Caco-2 (cell line): ENCODE measurements at regions of chr2 and their contacts with region 1.

Region 1: DNA sequence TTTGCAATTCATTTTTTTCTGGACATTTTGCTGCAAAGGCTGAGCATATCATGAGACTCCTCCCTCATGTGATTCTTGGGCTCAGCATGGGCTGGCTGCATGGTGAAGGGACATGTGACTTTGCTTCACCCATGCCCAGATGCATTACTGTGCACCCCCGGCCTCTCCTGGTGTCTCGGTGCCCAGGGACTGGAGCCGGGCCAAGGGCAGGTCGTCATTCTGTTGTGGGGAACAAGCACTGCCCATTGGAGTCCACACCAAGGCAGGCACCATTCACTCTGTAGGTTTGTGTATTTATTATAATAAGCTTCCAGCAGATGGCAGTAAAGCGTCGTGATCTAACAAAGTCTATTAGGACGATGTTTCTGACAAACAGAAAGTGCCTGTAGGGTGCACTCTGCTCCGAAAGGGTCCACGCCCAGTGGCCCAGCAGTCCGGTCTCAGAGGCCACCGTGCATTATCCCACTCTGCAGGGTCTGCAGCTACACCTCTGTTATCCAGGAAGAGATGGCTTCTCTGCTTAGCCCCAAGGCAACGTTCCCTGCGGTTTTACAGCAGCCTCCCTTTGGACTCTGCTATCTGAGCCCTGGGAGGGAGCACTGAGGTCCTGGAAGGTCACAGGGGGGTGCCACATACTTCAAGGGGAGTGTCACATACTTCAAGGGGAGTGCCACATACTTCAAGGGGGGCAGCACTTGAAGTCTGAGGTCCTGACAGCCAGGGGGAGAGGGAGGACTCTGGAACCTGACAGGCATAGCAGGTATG is 219.6 kb downstream of the TSN start:
- DNase-seq: peak; percentile 77 to 82
- H3K4me3 ChIP-seq: peak overlapping the region; percentile 11; the same call in 1 of the 2 replicates
- H3K4me3 Mint-ChIP-seq: peak overlapping the region; percentile 40
- H3K27ac Mint-ChIP-seq: peak overlapping the region; percentile 73
- H3K4me1 ChIP-seq: peaks cover 9% of the 10 kb centered on the region
- H3K4me1 Mint-ChIP-seq: peaks cover 10% of the 10 kb centered on the region
- H3K27me3 ChIP-seq: no peaks in the 10 kb centered on the region
- H3K27me3 Mint-ChIP-seq: peaks cover 8% of the 10 kb centered on the region
- CTCF ChIP-seq: peak; percentile 57 to 80

Region 2: DNA sequence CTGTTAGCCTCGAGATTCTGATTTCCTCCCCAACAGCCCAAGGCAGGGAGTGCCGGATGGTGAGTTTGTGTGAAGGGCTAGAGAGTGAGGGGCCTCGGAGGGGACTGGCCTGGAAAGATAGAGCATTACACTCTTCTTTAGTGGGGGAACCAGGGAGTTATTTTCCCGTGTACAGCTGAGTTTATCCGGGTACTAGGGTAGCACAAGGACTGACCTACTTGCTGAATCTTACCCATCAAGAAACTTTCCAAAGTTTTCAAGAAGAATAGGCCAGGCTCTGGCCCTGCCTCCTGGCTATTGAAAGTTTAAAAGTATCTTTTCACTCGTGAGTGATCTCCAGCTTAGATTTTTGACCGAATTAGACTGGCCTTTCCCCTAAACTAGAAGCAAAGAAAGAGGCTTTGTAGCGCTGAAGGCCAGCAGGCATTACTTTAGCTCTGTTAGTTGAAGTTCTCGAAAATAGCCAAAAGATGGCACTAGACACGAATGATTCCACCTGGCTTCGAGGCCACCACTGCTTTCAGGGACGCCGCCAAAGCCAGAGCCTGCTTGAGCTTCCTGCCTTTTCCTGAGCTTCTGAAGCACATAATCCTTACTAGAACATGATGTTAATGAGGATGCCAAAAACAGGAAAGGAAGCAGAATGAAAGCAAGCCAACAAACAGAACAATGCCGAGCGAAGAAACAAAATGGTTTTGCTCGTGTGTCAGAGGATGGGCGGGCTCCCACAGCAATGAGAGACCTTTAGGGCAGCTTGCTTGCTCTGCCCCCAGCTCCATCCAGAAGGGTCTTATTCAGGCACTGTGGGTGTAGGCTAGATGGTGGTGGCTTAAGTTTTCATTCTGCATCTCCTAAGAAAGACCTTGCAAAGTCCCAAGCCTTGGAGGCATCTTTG is 163.9 kb before region 1 on chr2:
- CTCF ChIA-PET with region 1: interaction called, 3 read pairs
- POLR2A ChIA-PET with region 1: no interaction called
- intact Hi-C with region 1: loop called (anchors 1 kb)
- DNase-seq: peak; percentile 66 to 70
- H3K4me3 ChIP-seq: no peak overlapping the region
- H3K4me3 Mint-ChIP-seq: no peak overlapping the region
- H3K27ac Mint-ChIP-seq: no peak overlapping the region
- H3K4me1 ChIP-seq: no peaks in the 10 kb centered on the region
- H3K4me1 Mint-ChIP-seq: peaks cover 9% of the 10 kb centered on the region
- H3K27me3 ChIP-seq: no peaks in the 10 kb centered on the region
- H3K27me3 Mint-ChIP-seq: no peaks in the 10 kb centered on the region
- CTCF ChIP-seq: peak; percentile 60 to 65

Region 3: DNA sequence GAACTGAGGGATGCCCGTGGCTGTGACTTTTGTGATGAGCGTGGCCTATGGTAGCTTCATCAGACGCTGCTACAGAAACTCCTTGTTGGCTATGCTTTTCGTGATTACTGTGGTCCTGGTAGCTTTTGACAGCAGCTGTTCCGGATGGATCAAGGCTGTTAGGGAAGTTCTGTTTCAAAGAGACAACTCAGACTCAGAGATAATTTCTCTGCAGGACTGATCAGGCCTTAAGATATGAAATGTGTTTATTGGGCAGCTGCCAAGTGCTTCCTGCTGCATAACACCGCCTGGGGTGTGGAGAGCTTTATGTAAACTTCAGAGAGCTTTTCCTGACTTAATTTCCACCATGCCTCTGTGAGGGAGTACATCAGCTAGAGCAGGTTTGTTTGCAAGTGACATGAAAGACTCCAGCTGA is 24.2 kb after region 1 on chr2:
- CTCF ChIA-PET with region 1: no interaction called
- POLR2A ChIA-PET with region 1: no interaction called
- intact Hi-C with region 1: no loop called
- DNase-seq: no peak
- H3K4me3 ChIP-seq: no peak overlapping the region
- H3K4me3 Mint-ChIP-seq: no peak overlapping the region
- H3K27ac Mint-ChIP-seq: no peak overlapping the region
- H3K4me1 ChIP-seq: no peaks in the 10 kb centered on the region
- H3K4me1 Mint-ChIP-seq: no peaks in the 10 kb centered on the region
- H3K27me3 ChIP-seq: no peaks in the 10 kb centered on the region
- H3K27me3 Mint-ChIP-seq: no peaks in the 10 kb centered on the region
- CTCF ChIP-seq: no peak

Region 4: GRCh38 chr2:122136056-122136455 is 161.0 kb after region 1 on chr2:
- CTCF ChIA-PET with region 1: no interaction called
- POLR2A ChIA-PET with region 1: no interaction called
- intact Hi-C with region 1: loop called (anchors 1 kb)
- DNase-seq: peak in 1 of 2 experiments; percentile 45
- H3K4me3 ChIP-seq: no peak overlapping the region
- H3K4me3 Mint-ChIP-seq: no peak overlapping the region
- H3K27ac Mint-ChIP-seq: no peak overlapping the region
- H3K4me1 ChIP-seq: peaks cover 24% of the 10 kb centered on the region
- H3K4me1 Mint-ChIP-seq: peaks cover 15% of the 10 kb centered on the region
- H3K27me3 ChIP-seq: no peaks in the 10 kb centered on the region
- H3K27me3 Mint-ChIP-seq: no peaks in the 10 kb centered on the region
- CTCF ChIP-seq: peak; percentile 39 to 64

Region 5: GRCh38 chr2:122191341-122191740 is 216.3 kb after region 1 on chr2:
- CTCF ChIA-PET with region 1: no interaction called
- POLR2A ChIA-PET with region 1: no interaction called
- intact Hi-C with region 1: loop called (anchors 2 kb)
- DNase-seq: peak; percentile 55 to 59
- H3K4me3 ChIP-seq: no peak overlapping the region
- H3K4me3 Mint-ChIP-seq: no peak overlapping the region
- H3K27ac Mint-ChIP-seq: no peak overlapping the region
- H3K4me1 ChIP-seq: no peaks in the 10 kb centered on the region
- H3K4me1 Mint-ChIP-seq: no peaks in the 10 kb centered on the region
- H3K27me3 ChIP-seq: no peaks in the 10 kb centered on the region
- H3K27me3 Mint-ChIP-seq: peaks cover 6% of the 10 kb centered on the region
- CTCF ChIP-seq: peak; percentile 31 to 56

Region 6: GRCh38 chr2:122300758-122301157 is 325.7 kb after region 1 on chr2:
- CTCF ChIA-PET with region 1: no interaction called
- POLR2A ChIA-PET with region 1: no interaction called
- intact Hi-C with region 1: loop called (anchors 2 kb)
- DNase-seq: peak in 1 of 2 experiments; percentile 2
- H3K4me3 ChIP-seq: no peak overlapping the region
- H3K4me3 Mint-ChIP-seq: no peak overlapping the region
- H3K27ac Mint-ChIP-seq: no peak overlapping the region
- H3K4me1 ChIP-seq: no peaks in the 10 kb centered on the region
- H3K4me1 Mint-ChIP-seq: no peaks in the 10 kb centered on the region
- H3K27me3 ChIP-seq: no peaks in the 10 kb centered on the region
- H3K27me3 Mint-ChIP-seq: peaks cover 3% of the 10 kb centered on the region
- CTCF ChIP-seq: no peak

Region 7: GRCh38 chr2:122451040-122451439 is 476.0 kb after region 1 on chr2:
- CTCF ChIA-PET with region 1: no interaction called
- POLR2A ChIA-PET with region 1: no interaction called
- intact Hi-C with region 1: loop called (anchors 1 kb)
- DNase-seq: peak in 1 of 2 experiments; percentile 47
- H3K4me3 ChIP-seq: no peak overlapping the region
- H3K4me3 Mint-ChIP-seq: no peak overlapping the region
- H3K27ac Mint-ChIP-seq: no peak overlapping the region
- H3K4me1 ChIP-seq: no peaks in the 10 kb centered on the region
- H3K4me1 Mint-ChIP-seq: no peaks in the 10 kb centered on the region
- H3K27me3 ChIP-seq: no peaks in the 10 kb centered on the region
- H3K27me3 Mint-ChIP-seq: no peaks in the 10 kb centered on the region
- CTCF ChIP-seq: peak; percentile 49 to 53